ENCODE measurements at regions of chr4 and their contacts with region 1.

Region 1: GRCh38 chr4:6546681-6547447 is 28.1 kb upstream of the MAN2B2 start:
- DNase-seq: peak; percentile 37
- H3K4me3 ChIP-seq: no peak overlapping the region
- H3K27ac ChIP-seq: no peak overlapping the region
- H3K4me1 ChIP-seq: no peaks in the 10 kb centered on the region
- H3K27me3 ChIP-seq: no peaks in the 10 kb centered on the region
- CTCF ChIP-seq: peak; percentile 94

Region 2: DNA sequence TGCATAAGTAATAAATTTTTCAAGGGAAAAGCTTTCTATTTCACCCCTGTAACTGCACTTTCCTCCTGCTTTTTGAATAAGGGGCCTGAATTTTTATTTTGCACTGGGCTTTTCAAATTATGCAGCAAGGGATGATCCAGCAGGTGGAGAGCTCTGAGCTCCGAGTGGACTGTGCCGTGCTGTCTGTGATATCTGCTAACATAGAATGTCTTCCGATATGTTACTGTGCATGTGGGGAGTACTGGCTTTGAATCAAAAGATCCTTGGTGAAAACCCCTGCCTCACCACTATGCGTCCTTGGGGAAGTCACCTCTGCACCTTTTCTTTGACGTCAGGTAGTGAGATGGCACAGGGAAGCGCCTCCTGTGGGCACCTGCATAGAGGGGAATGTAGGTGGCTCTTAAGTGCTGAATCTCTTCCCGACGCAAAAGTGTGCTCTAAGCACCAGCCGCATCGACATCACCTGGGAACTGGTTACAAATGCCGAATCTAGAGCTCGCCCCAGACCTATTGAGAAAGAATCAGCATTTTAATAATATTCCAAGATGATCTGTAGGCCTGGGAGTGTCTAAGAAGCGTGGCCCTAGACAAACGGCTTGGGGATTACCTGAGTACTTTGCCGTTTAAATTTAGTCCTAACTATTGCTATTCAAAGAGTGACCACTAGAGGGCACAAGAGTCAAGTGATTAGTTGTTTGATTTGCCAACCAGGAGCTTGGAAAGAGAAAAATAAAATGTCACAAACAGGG is 296.5 kb before region 1 on chr4:
- CTCF ChIA-PET with region 1: no interaction called
- POLR2A ChIA-PET with region 1: no interaction called
- intact Hi-C with region 1: loop called (anchors 1 kb)
- DNase-seq: peak; percentile 22 to 59
- H3K4me3 ChIP-seq: no peak overlapping the region
- H3K27ac ChIP-seq: no peak overlapping the region
- H3K4me1 ChIP-seq: no peaks in the 10 kb centered on the region
- H3K27me3 ChIP-seq: peaks cover 38% of the 10 kb centered on the region; the same call in 1 of the 2 replicates
- CTCF ChIP-seq: peak; percentile 86

Region 3: GRCh38 chr4:6343950-6344408 is 202.9 kb before region 1 on chr4:
- CTCF ChIA-PET with region 1: no interaction called
- POLR2A ChIA-PET with region 1: no interaction called
- intact Hi-C with region 1: loop called (anchors 1 kb)
- DNase-seq: peak; percentile 74 to 84
- H3K4me3 ChIP-seq: peak overlapping the region; percentile 15; the same call in 1 of the 2 replicates
- H3K27ac ChIP-seq: peak overlapping the region; percentile 46
- H3K4me1 ChIP-seq: peaks cover 18% of the 10 kb centered on the region
- H3K27me3 ChIP-seq: no peaks in the 10 kb centered on the region
- CTCF ChIP-seq: no peak; the same call in 1 of the 2 replicates

Region 4: DNA sequence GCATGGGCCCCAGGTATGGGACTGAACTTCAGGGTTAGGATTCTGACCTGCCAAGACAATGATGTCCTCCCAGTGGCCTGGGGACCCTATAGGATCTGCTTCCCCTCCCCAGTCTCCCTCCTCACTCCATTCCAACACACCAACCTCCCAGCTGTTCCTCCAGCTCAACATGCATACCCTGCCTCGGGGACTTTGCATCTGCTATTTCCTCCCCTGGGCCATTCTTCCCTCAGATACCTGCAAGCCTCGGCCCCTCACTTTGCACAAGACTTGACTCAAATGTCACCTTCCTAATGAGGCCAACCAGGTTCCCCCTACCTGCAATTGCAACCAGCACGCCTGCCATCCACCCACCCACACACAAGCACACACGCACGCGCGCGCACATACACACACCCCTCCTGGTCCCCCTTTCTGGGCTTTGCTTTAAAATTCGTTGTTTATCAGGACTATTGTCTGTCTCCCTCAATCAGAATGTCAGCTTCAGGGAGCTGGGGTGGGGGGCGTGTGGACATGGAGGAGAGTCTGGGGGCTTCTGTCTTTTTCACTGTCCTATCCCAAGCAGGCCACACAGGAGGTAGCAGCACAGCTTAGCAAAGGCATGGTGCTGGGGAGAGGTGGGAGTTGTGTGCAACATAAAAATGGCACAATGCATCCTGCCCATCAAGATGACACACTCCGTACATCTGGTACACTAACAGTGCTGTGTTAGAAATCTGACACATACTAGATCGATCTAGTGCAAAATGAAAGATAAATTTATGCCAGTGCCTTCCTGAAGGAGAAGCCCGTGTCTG is 53.8 kb before region 1 on chr4:
- CTCF ChIA-PET with region 1: interaction called, 10 read pairs
- POLR2A ChIA-PET with region 1: no interaction called
- intact Hi-C with region 1: no loop called
- DNase-seq: no peak
- H3K4me3 ChIP-seq: no peak overlapping the region
- H3K27ac ChIP-seq: no peak overlapping the region
- H3K4me1 ChIP-seq: no peaks in the 10 kb centered on the region
- H3K27me3 ChIP-seq: no peaks in the 10 kb centered on the region
- CTCF ChIP-seq: no peak

Region 5: DNA sequence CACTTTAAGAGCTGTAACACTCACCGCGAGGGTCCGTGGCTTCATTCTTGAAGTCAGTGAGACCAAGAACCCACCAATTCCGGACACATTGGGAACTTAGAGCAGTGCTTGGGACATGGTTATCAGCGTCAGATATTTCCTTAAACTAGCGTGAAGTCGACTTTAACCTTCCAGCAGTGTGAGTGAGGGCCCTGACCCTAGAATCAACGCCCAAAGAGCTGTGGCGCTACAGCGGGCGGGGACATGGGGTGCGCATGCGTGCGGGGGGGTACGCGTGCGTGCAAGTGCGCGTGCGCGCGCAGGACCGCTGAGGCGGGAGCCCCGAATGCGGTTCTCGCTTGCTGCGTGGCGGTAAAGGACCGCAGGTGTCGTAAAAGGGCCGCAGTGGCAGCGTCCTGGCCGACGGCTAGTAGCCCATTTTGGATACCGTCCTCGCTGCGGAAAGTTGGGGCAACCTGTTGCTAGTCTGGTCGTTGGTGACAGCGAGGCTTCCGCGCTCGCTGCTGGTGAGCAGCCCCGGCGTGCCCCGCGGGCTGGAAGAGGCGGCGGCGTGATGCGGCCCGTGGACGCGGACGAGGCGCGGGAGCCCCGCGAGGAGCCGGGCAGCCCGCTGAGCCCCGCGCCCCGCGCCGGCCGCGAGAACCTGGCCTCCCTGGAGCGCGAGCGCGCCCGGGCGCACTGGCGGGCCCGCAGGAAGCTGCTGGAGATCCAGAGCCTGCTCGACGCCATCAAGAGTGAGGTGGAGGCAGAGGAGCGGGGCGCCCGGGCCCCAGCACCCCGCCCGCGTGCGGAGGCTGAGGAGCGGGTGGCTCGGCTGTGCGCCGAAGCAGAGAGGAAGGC is 127.0 kb after region 1 on chr4:
- CTCF ChIA-PET with region 1: interaction called, 5 read pairs
- POLR2A ChIA-PET with region 1: no interaction called
- intact Hi-C with region 1: loop called (anchors 5 kb)
- DNase-seq: peak; percentile 82 to 89
- H3K4me3 ChIP-seq: peak overlapping the region; percentile 62
- H3K27ac ChIP-seq: peak overlapping the region; percentile 76
- H3K4me1 ChIP-seq: peaks cover 24% of the 10 kb centered on the region
- H3K27me3 ChIP-seq: no peaks in the 10 kb centered on the region
- CTCF ChIP-seq: no peak

Region 6: DNA sequence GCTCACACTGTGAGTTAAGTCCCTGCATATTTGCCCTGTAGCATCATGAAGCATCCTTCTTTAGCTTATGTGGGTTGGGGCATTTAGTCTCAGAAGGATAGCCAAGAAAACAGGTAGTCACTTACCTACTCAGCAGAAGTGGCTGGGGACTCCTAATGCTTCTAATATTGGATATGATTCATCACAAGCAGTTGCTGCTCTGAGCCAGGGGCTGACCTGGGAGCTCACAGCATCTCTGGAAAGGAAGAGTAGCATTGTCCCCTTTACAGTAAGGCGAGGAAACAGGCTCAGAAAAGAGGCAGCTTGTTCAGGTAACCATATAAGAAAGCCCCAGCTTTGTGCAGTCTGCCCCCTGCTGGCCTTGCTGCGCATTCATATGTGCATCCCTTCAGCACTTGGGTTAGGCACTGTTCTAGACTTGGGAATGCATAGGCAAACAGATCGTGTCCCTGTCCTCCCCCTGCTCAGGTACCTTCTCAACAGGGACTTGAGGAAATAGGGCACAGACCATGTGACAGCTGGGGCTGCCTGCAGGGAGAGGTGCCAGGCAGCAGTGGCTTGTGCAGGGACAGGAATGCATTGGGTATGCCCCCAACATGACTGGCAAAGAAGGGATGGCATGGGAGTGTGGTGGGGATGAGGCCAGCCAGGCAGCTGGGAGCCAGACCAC is 327.1 kb after region 1 on chr4:
- CTCF ChIA-PET with region 1: no interaction called
- POLR2A ChIA-PET with region 1: no interaction called
- intact Hi-C with region 1: loop called (anchors 10 kb)
- DNase-seq: peak in 1 of 2 experiments; percentile 58
- H3K4me3 ChIP-seq: no peak overlapping the region
- H3K27ac ChIP-seq: no peak overlapping the region
- H3K4me1 ChIP-seq: no peaks in the 10 kb centered on the region
- H3K27me3 ChIP-seq: no peaks in the 10 kb centered on the region
- CTCF ChIP-seq: peak; percentile 79

Region 7: GRCh38 chr4:7186061-7186461 is 639.2 kb after region 1 on chr4:
- CTCF ChIA-PET with region 1: no interaction called
- POLR2A ChIA-PET with region 1: no interaction called
- intact Hi-C with region 1: loop called (anchors 10 kb)
- DNase-seq: peak in 1 of 2 experiments; percentile 36
- H3K4me3 ChIP-seq: no peak overlapping the region
- H3K27ac ChIP-seq: no peak overlapping the region
- H3K4me1 ChIP-seq: no peaks in the 10 kb centered on the region
- H3K27me3 ChIP-seq: peaks cover 7% of the 10 kb centered on the region
- CTCF ChIP-seq: peak; percentile 30; the same call in 1 of the 2 replicates